ENCODE measurements at regions of chr9 and their contacts with region 1.

Region 1: DNA sequence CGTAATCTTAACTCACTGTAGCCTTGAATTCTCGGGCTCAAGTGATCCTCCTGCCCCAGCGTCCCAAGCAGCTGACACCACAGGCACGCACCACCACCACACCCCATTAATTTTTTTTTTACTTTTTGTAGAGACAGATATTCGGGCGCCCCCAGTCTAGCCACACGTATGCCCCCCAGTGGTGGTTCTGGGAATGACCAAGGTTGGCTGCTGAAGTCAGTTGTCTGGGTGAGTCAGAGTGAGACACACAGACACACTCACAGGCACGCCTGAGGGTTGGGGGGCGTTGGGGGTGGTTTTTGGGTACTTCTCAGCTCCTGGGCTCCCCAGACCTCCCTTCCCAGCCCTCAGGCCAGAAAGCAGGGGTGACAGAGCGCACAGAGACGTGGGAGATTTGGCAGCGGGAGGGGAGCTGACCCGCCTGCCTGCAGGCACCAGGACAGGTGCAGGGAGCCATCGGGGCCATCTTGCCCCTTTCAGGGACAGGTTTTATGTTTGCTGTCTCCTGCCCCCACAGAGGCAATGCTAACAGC is 4.2 kb upstream of the ENTPD8 start:
- DNase-seq: peak; percentile 60 to 87 (median 71)
- ATAC-seq: peak; percentile 84
- H3K4me3 ChIP-seq: no peak overlapping the region
- H3K27ac ChIP-seq: no peak overlapping the region
- H3K4me1 ChIP-seq: peaks cover 8 to 54% of the 10 kb centered on the region in 2 experiments; a peak in 4 of 5 replicates
- H3K27me3 ChIP-seq: no peaks in the 10 kb centered on the region
- CTCF ChIP-seq: peak; percentile 92 to 93 (median 93)
- EP300 ChIP-seq: peak; percentile 19; the same call in 1 of the 2 replicates
- POLR2A ChIP-seq: no peak
- RAD21 ChIP-seq: peak; percentile 84 to 85

Region 2: GRCh38 chr9:137286975-137287383 is 158.4 kb before region 1 on chr9:
- CTCF ChIA-PET with region 1: no interaction called
- POLR2A ChIA-PET with region 1: interaction called, 4 read pairs
- in situ Hi-C with region 1: loop called (anchors 5 kb)
- intact Hi-C with region 1: no loop called
- DNase-seq: peak; percentile 60 to 86 (median 74)
- ATAC-seq: peak; percentile 100
- H3K4me3 ChIP-seq: no peak overlapping the region
- H3K27ac ChIP-seq: no peak overlapping the region
- H3K4me1 ChIP-seq: no peaks in the 10 kb centered on the region
- H3K27me3 ChIP-seq: no peaks in the 10 kb centered on the region
- CTCF ChIP-seq: peak; percentile 82 to 86 (median 82)
- EP300 ChIP-seq: no peak
- POLR2A ChIP-seq: no peak
- RAD21 ChIP-seq: peak; percentile 40 to 81; a peak in 3 of 4 replicates

Region 3: DNA sequence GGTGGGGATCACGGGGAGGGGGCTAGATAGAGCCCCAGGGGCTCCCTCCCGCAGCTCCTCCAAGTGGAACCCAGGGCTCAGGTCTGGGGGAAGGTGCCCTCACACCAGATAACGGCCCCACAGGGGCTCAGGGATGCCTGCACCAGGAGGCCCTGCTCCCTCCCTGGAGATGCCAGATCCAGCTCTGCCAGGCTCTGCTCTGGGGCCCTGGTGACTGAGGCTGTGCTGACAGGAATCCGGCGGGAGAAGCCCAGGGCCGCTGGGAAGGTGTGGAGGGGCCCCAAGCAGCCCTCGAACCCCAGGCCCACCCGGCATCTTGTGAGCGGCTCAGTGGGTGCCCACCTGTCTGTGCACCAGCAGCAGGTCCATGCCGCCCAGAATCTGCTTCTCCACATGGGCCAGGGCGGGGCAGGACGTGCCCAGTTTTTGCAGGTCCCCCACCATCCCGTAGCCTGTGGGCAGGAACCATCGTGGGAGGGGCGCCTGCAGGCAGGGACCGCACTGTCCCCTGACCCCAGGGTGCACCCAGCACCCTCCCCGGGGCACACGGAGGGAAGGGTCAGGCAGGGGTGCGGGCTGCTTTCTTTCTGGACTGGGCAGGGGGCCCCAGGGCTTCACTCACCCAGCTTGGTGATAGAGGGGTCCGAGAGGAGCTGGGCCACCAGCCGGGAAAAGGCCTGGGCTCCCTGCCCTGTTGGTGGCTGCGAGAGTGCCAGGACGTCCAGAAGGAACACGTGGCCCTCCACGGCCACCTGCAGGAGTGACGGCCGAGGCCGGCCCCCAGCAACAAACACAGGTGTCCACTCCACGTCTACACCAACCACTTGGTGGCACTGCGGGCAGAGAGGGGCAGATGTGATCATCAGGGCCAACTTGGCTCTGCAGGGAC is 94.4 kb before region 1 on chr9:
- CTCF ChIA-PET with region 1: no interaction called
- POLR2A ChIA-PET with region 1: no interaction called
- in situ Hi-C with region 1: no loop called
- intact Hi-C with region 1: no loop called
- DNase-seq: no peak
- ATAC-seq: no peak
- H3K4me3 ChIP-seq: no peak overlapping the region
- H3K27ac ChIP-seq: no peak overlapping the region
- H3K4me1 ChIP-seq: peaks cover 0 to 35% of the 10 kb centered on the region in 2 experiments; a peak in 2 of 5 replicates
- H3K27me3 ChIP-seq: peaks cover 2 to 21% of the 10 kb centered on the region in 2 experiments; a peak in 2 of 5 replicates
- CTCF ChIP-seq: no peak
- EP300 ChIP-seq: no peak
- POLR2A ChIP-seq: no peak
- RAD21 ChIP-seq: no peak

Region 4: GRCh38 chr9:137462986-137463930 is 17.9 kb after region 1 on chr9:
- CTCF ChIA-PET with region 1: no interaction called
- POLR2A ChIA-PET with region 1: no interaction called
- in situ Hi-C with region 1: no loop called
- intact Hi-C with region 1: no loop called
- DNase-seq: no peak
- ATAC-seq: no peak
- H3K4me3 ChIP-seq: no peak overlapping the region
- H3K27ac ChIP-seq: no peak overlapping the region
- H3K4me1 ChIP-seq: peaks cover 17 to 86% of the 10 kb centered on the region in 2 experiments
- H3K27me3 ChIP-seq: no peaks in the 10 kb centered on the region
- CTCF ChIP-seq: no peak
- EP300 ChIP-seq: no peak
- POLR2A ChIP-seq: no peak
- RAD21 ChIP-seq: no peak

Region 5: GRCh38 chr9:137534256-137535117 is 89.1 kb after region 1 on chr9:
- CTCF ChIA-PET with region 1: interaction called, 3 read pairs
- POLR2A ChIA-PET with region 1: no interaction called
- in situ Hi-C with region 1: no loop called
- intact Hi-C with region 1: loop called (anchors 10 kb)
- DNase-seq: peak; percentile 56 to 86 (median 65)
- ATAC-seq: peak; percentile 92
- H3K4me3 ChIP-seq: no peak overlapping the region
- H3K27ac ChIP-seq: peak overlapping the region; percentile 11; the same call in 2 of the 3 replicates
- H3K4me1 ChIP-seq: peaks cover 11 to 19% of the 10 kb centered on the region in 2 experiments; a peak in 4 of 5 replicates
- H3K27me3 ChIP-seq: no peaks in the 10 kb centered on the region
- CTCF ChIP-seq: peak; percentile 78 to 85 (median 79)
- EP300 ChIP-seq: no peak
- POLR2A ChIP-seq: no peak
- RAD21 ChIP-seq: peak; percentile 26 to 50; a peak in 3 of 4 replicates

Measured in K562 (cell line).